WTC11 (cell line): ENCODE measurements at regions of chr20 and their contacts with region 1.

Region 1: GRCh38 chr20:50085452-50086365 is 27.2 kb downstream of the UBE2V1 start:
- DNase-seq: peak; percentile 50
- ATAC-seq: peak; percentile 90
- H3K4me3 Mint-ChIP-seq: peak overlapping the region; percentile 31
- H3K27ac Mint-ChIP-seq: peak overlapping the region; percentile 87
- H3K4me1 Mint-ChIP-seq: peaks cover 27% of the 10 kb centered on the region
- H3K27me3 Mint-ChIP-seq: no peaks in the 10 kb centered on the region
- CTCF ChIP-seq: peak; percentile 62

Region 2: DNA sequence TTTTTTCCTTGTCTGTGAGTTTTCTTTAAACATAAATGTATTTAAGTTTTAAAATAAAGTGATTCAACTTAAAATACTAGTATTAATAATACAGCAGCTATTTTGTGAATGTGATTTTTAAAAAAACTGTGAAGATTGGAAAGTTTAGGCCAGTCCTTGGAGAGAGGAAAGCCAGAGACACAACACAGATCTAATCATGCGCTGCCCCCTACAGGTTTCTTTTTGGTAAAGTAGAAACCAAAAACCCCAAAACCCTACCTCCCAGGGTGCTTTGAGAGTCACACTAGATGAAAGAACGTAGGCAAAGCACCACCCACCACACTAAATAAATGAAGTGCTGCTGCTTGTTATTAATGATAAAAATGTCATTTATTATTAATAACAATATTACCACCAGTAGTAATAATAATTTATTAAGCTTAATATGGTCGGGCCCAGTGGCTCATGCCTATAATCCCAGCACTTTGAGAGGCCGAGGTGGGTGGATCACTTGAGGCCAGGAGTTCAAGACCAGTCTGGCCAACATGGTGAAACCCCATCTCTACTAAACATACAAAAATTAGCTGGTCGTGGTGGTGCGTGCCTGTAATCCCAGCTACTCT is 239.4 kb before region 1 on chr20:
- CTCF ChIA-PET with region 1: no interaction called
- POLR2A ChIA-PET with region 1: no interaction called
- DNase-seq: peak; percentile 39
- ATAC-seq: peak; percentile 84
- H3K4me3 Mint-ChIP-seq: no peak overlapping the region
- H3K27ac Mint-ChIP-seq: no peak overlapping the region
- H3K4me1 Mint-ChIP-seq: peaks cover 35% of the 10 kb centered on the region
- H3K27me3 Mint-ChIP-seq: no peaks in the 10 kb centered on the region
- CTCF ChIP-seq: peak; percentile 26; the same call in 1 of the 2 replicates

Region 3: DNA sequence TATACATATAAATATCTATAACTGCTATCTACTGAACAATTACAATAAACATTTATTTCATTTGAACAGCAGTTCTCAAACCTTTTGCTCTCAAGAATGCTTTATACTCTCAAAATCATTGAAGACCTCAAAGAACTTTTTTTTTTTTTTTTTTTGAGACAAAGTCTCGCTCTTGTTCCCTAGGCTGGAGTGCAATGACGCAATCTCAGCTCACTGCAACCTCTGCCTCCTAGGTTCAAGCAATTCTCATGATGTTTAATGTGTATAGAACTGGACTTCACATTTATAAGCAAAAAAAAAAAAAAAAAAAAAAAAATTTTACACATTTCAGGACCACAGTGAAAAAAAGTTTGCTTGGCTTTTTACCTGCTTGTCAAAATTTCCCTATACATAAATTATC is 15.6 kb after region 1 on chr20:
- CTCF ChIA-PET with region 1: interaction called, 11 read pairs
- POLR2A ChIA-PET with region 1: interaction called, 3 read pairs
- DNase-seq: no peak
- ATAC-seq: no peak
- H3K4me3 Mint-ChIP-seq: no peak overlapping the region
- H3K27ac Mint-ChIP-seq: peak overlapping the region; percentile 74; the same call in 1 of the 2 replicates
- H3K4me1 Mint-ChIP-seq: peaks cover 43% of the 10 kb centered on the region
- H3K27me3 Mint-ChIP-seq: no peaks in the 10 kb centered on the region
- CTCF ChIP-seq: no peak

Region 4: DNA sequence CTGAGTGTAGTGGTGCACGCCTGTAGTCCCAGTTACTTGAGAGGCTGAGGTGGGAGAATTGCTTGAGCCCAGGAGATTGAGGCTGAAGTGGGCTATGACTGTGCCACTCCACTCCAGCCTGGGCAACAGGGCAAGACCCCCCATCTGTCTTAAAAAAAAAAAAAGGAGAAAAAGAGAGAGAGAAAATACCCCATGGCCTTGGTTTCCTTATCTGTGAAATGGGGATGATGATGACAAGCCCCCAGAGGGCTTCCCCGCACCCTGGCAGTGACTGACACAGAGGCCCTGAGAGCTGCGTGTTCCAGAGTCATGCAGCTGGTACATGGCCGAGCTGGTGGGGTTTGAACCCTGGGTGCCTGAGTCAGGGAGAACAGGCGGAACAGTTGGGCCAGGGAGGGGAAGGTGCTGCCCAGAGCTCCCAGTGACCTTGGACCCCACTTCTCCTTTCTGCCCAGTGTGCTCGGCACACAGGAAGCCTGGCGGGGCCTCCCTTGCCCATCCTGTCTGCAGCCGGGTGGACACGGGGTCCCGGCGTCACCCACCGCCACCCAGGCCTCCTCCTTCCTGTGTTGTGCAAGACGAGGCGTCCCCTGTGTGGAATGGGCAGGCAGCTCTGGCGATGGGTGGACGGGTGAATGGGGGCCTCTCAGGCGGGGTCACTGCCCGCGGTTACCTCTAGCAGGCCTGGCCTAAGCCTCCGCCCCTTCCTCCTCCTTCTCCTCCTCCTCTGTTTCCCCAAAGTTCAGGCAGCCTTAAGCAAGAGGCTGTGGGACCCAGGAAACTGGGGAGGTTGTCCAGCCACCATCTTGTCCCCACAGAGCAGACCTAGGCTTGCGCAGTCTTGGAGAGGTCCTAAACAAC is 189.1 kb after region 1 on chr20:
- CTCF ChIA-PET with region 1: no interaction called
- POLR2A ChIA-PET with region 1: no interaction called
- DNase-seq: no peak
- ATAC-seq: no peak
- H3K4me3 Mint-ChIP-seq: no peak overlapping the region
- H3K27ac Mint-ChIP-seq: no peak overlapping the region
- H3K4me1 Mint-ChIP-seq: no peaks in the 10 kb centered on the region
- H3K27me3 Mint-ChIP-seq: no peaks in the 10 kb centered on the region
- CTCF ChIP-seq: no peak